HCT116 (cell line): ENCODE measurements at regions of chr6 and their contacts with region 1.

Region 1: GRCh38 chr6:13574149-13574570 is 241 bp upstream of the SIRT5 start:
- DNase-seq: peak; percentile 86
- ATAC-seq: peak; percentile 81
- H3K4me3 ChIP-seq: peak overlapping the region; percentile 68 to 85
- H3K27ac ChIP-seq: peak overlapping the region; percentile 98
- H3K4me1 ChIP-seq: peaks cover 8 to 21% of the 10 kb centered on the region in 2 experiments
- H3K27me3 ChIP-seq: no peaks in the 10 kb centered on the region
- CTCF ChIP-seq: peak in 2 of 3 experiments; percentile 32 to 34; a peak in 3 of 6 replicates
- POLR2A ChIP-seq: peak; percentile 24
- RAD21 ChIP-seq: peak; percentile 33

Region 2: DNA sequence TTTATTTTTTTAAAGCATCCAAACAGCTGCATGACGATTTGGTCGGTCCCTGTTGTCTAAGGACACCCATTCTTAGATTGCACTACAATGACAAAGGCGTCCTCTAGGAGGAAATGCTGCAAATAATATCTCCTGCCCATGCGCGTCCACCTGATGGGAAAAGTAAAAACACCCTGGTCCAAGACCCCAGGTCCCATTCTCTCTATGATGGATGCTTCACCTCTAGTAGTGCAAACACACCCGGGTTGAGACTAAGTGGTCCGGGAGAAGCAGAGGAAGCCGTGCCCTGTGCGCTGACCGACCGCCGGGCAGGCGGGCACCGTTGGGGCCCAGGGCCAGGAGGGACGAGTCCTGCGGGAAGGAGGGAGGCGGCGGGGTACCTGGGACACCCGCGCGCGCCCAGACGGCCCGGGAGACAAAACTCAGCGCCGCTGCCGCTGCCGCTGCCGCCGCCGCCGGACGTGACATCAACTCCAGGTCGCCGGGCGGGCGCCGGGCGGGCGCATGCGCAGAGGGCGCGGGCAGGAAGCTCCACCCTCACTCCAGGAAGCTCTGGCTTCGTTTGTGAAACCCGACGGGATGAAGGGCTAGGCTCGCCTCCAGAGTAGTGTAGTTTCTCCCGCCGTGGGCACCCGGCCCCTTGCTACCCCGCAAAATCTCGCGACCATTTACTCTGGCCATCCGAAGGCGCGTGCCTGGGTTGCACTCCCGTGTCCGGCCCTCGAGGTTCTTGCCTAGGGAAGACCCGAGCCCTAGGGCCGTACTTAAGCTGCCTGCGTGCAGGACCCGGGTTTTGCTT is 245.9 kb before region 1 on chr6 and contains the start of gene TBC1D7:
- CTCF ChIA-PET with region 1: interaction called, 8 read pairs
- POLR2A ChIA-PET with region 1: interaction called, 9 read pairs
- RAD21 ChIA-PET with region 1: no interaction called
- intact Hi-C with region 1: loop called (anchors 2 kb)
- DNase-seq: peak; percentile 73
- ATAC-seq: peak; percentile 91
- H3K4me3 ChIP-seq: peak within 1 kb of the TSS; percentile 84 to 91
- H3K27ac ChIP-seq: peak within 1 kb of the TSS; percentile 82
- H3K4me1 ChIP-seq: peaks cover 6 to 24% of the 10 kb centered on the region in 2 experiments
- H3K27me3 ChIP-seq: no peaks in the 10 kb centered on the region
- CTCF ChIP-seq: peak in 2 of 3 experiments; percentile 12; a peak in 1 of 6 replicates
- POLR2A ChIP-seq: peak; percentile 56
- RAD21 ChIP-seq: no peak
- total RNA-seq, gene TBC1D7: 13.7 TPM

Region 3: GRCh38 chr6:13336553-13336952 is 237.6 kb before region 1 on chr6:
- CTCF ChIA-PET with region 1: interaction called, 7 read pairs
- POLR2A ChIA-PET with region 1: interaction called, 3 read pairs
- RAD21 ChIA-PET with region 1: interaction called in 1 of 2 experiments, 4 read pairs
- intact Hi-C with region 1: loop called (anchors 1 kb)
- DNase-seq: peak; percentile 73
- ATAC-seq: peak; percentile 87
- H3K4me3 ChIP-seq: no peak overlapping the region
- H3K27ac ChIP-seq: no peak overlapping the region
- H3K4me1 ChIP-seq: peaks cover 0 to 9% of the 10 kb centered on the region in 2 experiments; a peak in 2 of 4 replicates
- H3K27me3 ChIP-seq: no peaks in the 10 kb centered on the region
- CTCF ChIP-seq: peak; percentile 75 to 93 (median 88)
- POLR2A ChIP-seq: no peak
- RAD21 ChIP-seq: peak; percentile 97

Region 4: DNA sequence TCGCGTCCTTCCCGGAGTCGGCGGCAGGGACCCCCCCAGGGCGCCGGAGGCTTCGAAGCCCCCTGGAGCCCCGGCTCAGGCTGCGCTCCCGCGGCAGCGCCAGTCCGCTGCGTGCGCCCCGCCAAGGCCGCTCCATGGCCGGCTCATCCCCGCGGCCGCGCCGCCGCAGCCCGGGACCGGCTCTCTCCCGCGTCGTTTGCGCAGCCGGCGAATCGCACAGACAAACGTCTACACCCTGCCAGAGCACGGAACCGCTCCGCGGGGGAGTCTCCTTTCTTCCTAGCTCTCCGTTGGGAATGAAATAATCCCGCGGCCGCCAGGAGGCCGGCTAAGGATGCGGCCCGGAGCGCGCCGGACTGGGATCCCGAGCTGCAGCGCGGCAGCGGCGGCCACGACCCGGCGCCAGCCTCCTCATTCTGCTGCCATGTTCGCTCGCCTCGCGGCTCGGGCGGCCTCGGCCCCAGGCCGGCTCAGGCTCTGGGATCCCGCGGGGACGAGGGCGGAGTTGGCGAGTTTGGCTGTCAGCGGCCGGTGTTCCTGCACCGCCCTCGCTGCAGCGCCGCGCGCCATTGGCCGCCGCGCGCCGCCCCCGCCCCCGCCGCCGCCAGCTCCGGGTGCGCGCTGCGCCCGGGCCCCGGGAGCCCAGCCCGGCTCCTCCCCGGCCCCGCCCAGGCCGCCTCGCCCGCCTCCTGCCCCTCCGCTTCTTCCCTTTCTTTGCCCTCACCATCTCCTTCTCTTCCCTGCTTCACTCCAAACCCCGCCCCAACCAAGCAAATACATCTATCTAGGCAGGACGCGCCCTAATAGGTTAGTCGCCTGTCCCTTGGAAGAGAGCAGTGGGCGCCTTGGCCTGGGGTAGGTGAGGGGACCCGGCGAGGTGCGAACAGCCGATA is 86.8 kb before region 1 on chr6 and contains the start of gene GFOD1:
- CTCF ChIA-PET with region 1: interaction called, 8 read pairs
- POLR2A ChIA-PET with region 1: interaction called, 3 read pairs
- RAD21 ChIA-PET with region 1: no interaction called
- intact Hi-C with region 1: loop called (anchors 5 kb)
- DNase-seq: peak; percentile 42
- ATAC-seq: peak; percentile 91
- H3K4me3 ChIP-seq: peak within 1 kb of the TSS; percentile 58 to 71
- H3K27ac ChIP-seq: peak within 1 kb of the TSS; percentile 54
- H3K4me1 ChIP-seq: peaks cover 7 to 25% of the 10 kb centered on the region in 2 experiments; a peak in 3 of 4 replicates
- H3K27me3 ChIP-seq: no peaks in the 10 kb centered on the region
- CTCF ChIP-seq: 0 out of 6 replicates have a peak, but pooled peaks of 1 of the 3 experiments have one; percentile 17
- POLR2A ChIP-seq: peak; percentile 33
- RAD21 ChIP-seq: no peak
- total RNA-seq, gene GFOD1: 3.8 TPM

Region 5: DNA sequence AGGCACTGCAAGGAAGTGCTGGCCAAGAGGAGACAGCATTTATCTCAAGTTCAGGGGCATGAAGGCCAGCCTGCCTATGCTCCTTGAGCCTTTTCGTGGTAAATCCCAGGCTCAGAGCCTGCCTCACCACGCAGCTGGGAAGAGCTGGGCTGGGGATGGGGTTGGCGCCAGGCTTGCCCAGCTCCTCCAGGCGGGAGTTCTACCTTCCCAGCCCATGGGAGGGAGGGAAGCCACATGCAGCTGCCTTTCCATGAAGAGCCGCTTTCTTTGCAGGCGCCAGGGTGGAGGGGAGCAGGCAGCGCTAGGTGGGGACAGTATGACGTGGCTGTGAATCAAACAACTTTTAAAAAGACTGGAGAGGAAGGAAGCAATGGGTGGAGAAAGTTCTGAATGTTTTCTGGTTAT is 19.2 kb before region 1 on chr6:
- CTCF ChIA-PET with region 1: interaction called, 11 read pairs
- POLR2A ChIA-PET with region 1: interaction called, 5 read pairs
- RAD21 ChIA-PET with region 1: no interaction called
- intact Hi-C with region 1: no loop called
- DNase-seq: no peak
- ATAC-seq: no peak
- H3K4me3 ChIP-seq: no peak overlapping the region
- H3K27ac ChIP-seq: no peak overlapping the region
- H3K4me1 ChIP-seq: peaks cover 0 to 6% of the 10 kb centered on the region in 2 experiments; a peak in 1 of 4 replicates
- H3K27me3 ChIP-seq: no peaks in the 10 kb centered on the region
- CTCF ChIP-seq: no peak
- POLR2A ChIP-seq: no peak
- RAD21 ChIP-seq: no peak

Region 6: DNA sequence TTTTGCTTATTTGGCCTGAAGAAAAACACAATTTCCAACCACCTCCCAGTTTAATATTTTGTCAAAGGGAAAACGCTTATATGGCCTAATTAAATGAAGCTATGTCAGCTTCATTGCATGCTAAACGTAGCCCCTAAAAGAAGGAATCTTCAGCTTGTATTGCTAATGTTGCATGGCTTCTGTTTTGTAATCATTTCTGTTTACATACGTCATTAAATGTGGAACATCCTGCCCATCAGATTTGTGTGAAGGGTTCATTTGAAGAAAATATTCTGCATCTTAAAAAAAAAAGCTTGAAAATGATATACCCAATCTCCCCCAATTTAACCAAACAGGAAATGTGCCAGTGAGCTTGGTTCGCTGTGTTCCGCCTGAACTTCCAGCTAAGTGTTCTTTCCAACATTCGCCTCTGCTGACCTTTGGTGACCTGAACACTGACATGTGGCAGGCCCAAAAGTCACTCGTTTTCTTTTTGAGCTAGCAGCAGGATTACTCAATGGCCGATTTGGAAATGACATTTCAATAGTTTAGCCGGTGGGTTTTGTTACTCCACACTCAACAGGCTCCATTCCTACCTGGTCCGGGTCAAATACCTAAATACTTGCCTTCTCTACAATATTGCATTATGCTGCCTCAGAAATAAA is 12.4 kb before region 1 on chr6:
- CTCF ChIA-PET with region 1: interaction called, 13 read pairs
- POLR2A ChIA-PET with region 1: interaction called, 7 read pairs
- RAD21 ChIA-PET with region 1: no interaction called
- intact Hi-C with region 1: no loop called
- DNase-seq: no peak
- ATAC-seq: no peak
- H3K4me3 ChIP-seq: no peak overlapping the region
- H3K27ac ChIP-seq: no peak overlapping the region
- H3K4me1 ChIP-seq: no peaks in the 10 kb centered on the region
- H3K27me3 ChIP-seq: no peaks in the 10 kb centered on the region
- CTCF ChIP-seq: no peak
- POLR2A ChIP-seq: no peak
- RAD21 ChIP-seq: no peak

Region 7: GRCh38 chr6:13614926-13615798 is 41.0 kb after region 1 on chr6 and contains the start of gene NOL7:
- CTCF ChIA-PET with region 1: interaction called, 20 read pairs
- POLR2A ChIA-PET with region 1: interaction called, 4 read pairs
- RAD21 ChIA-PET with region 1: interaction called in 1 of 2 experiments, 4 read pairs
- intact Hi-C with region 1: loop called (anchors 2 kb)
- DNase-seq: peak; percentile 95
- ATAC-seq: peak; percentile 92
- H3K4me3 ChIP-seq: peak within 1 kb of the TSS; percentile 94 to 98
- H3K27ac ChIP-seq: peak within 1 kb of the TSS; percentile 71
- H3K4me1 ChIP-seq: peaks cover 11 to 23% of the 10 kb centered on the region in 2 experiments; a peak in 3 of 4 replicates
- H3K27me3 ChIP-seq: no peaks in the 10 kb centered on the region
- CTCF ChIP-seq: peak; percentile 54 to 92 (median 82); a peak in 5 of 6 replicates
- POLR2A ChIP-seq: peak; percentile 89
- RAD21 ChIP-seq: no peak
- total RNA-seq, gene NOL7: 73.7 TPM